ENCODE measurements at regions of chr11 and their contacts with region 1.

Region 1: GRCh38 chr11:61429691-61430582 is at the starts of genes CPSF7 and SDHAF2:
- DNase-seq: peak; percentile 98
- H3K4me3 Mint-ChIP-seq: peak within 1 kb of the TSS; percentile 99
- H3K27ac Mint-ChIP-seq: peak within 1 kb of the TSS; percentile 99
- H3K4me1 Mint-ChIP-seq: peaks cover 65% of the 10 kb centered on the region
- H3K27me3 Mint-ChIP-seq: no peaks in the 10 kb centered on the region
- total RNA-seq, gene CPSF7: 89.6 to 90.2 TPM
- total RNA-seq, gene SDHAF2: 47.3 to 47.5 TPM

Region 2: DNA sequence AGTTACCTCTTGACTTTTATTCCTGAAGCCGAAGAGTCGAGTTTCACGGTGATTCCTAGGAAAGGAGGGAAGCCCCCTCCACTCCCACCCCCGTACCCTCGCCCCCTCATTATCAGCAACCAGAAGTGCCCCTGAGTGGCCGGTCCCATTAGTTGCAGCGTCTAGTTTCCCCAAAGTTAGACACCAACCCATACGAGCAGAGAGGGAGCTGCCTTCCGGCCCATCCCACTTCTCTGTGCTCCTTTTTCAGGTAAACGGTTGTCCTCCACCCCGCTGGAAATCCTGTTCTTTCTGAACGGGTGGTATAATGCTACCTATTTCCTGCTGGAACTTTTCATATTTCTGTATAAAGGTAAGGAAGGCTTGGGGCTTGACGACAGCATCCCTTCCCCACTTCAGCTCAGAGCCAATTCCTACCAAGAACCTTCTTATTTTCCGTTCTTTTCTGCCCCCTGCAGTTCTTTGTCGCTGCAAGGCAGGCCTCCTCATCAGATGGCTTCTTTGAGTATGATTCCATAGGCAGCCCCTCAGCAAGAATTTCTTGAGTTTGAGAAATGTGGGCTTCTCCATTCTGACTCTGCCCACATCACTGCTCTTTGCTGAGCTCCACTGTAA is 36.8 kb before region 1 on chr11:
- CTCF ChIA-PET with region 1: interaction called, 4 read pairs
- POLR2A ChIA-PET with region 1: interaction called, 33 read pairs
- DNase-seq: no peak
- H3K4me3 Mint-ChIP-seq: peak overlapping the region; percentile 80
- H3K27ac Mint-ChIP-seq: peak overlapping the region; percentile 85
- H3K4me1 Mint-ChIP-seq: peaks cover 25% of the 10 kb centered on the region
- H3K27me3 Mint-ChIP-seq: no peaks in the 10 kb centered on the region

Region 3: DNA sequence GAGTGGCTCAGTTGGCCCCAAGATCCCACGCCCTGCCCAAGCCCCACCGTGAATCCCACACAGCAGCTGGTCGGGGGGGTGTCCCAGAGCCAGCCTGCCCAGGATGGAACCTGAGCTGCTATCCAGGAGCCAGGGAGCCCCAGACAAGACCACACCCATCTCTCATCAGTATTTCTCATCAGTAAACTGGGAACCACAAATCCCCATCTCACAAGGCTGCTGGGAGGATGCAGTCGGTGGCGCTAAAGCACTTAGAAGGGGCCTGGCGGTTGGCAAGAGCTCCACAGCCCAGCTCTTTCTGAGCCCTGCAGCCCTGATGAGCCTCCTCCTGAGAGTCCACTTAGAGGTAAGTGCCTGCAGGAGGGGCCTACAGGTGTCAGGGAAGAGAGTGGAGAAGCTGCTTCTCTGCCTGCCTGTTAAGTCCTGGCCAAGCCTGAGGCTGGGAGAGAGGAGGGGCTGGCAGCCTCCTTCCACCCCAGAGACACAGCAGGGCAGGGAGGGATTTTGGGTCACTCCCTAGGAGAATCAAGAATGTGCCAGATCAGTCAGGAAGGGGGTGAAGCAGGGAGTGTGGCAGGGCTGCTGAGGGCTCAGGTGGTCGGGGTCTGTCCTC is 455.3 kb after region 1 on chr11:
- CTCF ChIA-PET with region 1: no interaction called
- POLR2A ChIA-PET with region 1: no interaction called
- DNase-seq: no peak
- H3K4me3 Mint-ChIP-seq: no peak overlapping the region
- H3K27ac Mint-ChIP-seq: no peak overlapping the region
- H3K4me1 Mint-ChIP-seq: no peaks in the 10 kb centered on the region
- H3K27me3 Mint-ChIP-seq: no peaks in the 10 kb centered on the region

Measured in activated CD4-positive, alpha-beta memory T cell treated with anti-CD3 and anti-CD28 coated beads, Interleukin-2, amount 10 ng/mL, durations not matched to agents 7 days and 5 days (primary cell).